ENCODE measurements at regions of chr10 and their contacts with region 1.

Region 1: DNA sequence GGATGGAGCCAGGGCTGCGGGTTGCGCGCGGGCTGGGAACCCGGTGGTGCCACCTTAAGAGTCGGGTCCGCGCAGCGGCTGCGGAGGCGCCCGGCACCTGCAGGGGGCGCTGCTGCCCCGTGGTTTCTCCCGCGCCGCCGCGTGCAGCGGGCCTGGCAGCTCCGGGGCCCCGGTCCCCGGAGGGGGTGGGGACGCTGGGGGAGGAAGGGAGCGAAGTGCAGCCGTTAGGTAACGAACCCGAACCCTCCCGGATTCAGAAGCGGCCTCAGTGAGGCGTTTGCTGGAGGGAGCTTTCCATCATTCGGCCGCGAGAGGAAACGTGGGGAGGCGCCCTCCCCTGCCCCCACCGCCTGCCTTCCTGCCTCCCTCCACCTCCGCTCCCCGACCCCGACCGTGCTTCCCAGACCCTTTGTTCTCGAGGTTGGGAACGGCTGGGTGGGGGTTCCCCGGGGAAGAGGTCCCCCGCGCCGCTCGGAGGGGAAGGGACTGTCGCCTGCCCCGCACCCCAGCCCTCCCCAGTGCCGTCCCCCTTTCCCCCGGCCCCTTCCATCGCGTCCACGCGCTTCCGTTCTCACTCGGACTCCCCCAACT is 29.6 kb downstream of the SKIDA1 start:
- DNase-seq: peak; percentile 73 to 93 (median 86)
- ATAC-seq: peak; percentile 84
- H3K4me3 ChIP-seq: peak overlapping the region; percentile 73
- H3K4me3 Mint-ChIP-seq: peak overlapping the region; percentile 78
- H3K27ac ChIP-seq: no peak overlapping the region
- H3K27ac Mint-ChIP-seq: peak overlapping the region; percentile 16
- H3K4me1 ChIP-seq: peaks cover 46% of the 10 kb centered on the region
- H3K4me1 Mint-ChIP-seq: peaks cover 25% of the 10 kb centered on the region
- H3K27me3 ChIP-seq: peaks cover 47 to 65% of the 10 kb centered on the region in 2 experiments
- H3K27me3 Mint-ChIP-seq: peaks cover 68% of the 10 kb centered on the region
- CTCF ChIP-seq: peak; percentile 93

Region 2: DNA sequence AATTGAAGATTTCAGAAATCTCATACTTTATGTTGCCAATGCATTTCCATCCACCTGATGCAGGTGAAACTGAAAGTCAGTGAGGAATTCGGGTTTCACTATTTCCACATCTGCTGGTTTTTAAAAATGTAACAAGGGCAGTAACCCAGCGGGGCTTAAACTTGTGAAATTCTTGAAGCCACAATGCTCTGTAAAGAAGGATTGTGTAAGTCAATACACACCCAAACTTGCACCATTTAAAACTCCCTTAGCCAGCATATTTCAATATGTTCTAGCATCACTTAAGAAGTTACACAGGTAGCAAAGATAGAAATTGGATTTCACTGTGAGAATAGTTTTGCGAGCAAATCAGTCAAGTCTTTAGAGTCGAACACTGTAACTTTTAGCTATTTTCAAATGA is 1293.5 kb before region 1 on chr10:
- CTCF ChIA-PET with region 1: no interaction called
- POLR2A ChIA-PET with region 1: no interaction called
- intact Hi-C with region 1: no loop called
- DNase-seq: peak in 2 of 14 experiments; percentile 0 to 7
- ATAC-seq: no peak
- H3K4me3 ChIP-seq: no peak overlapping the region
- H3K4me3 Mint-ChIP-seq: no peak overlapping the region
- H3K27ac ChIP-seq: no peak overlapping the region
- H3K27ac Mint-ChIP-seq: no peak overlapping the region
- H3K4me1 ChIP-seq: no peaks in the 10 kb centered on the region
- H3K4me1 Mint-ChIP-seq: no peaks in the 10 kb centered on the region
- H3K27me3 ChIP-seq: no peaks in the 10 kb centered on the region
- H3K27me3 Mint-ChIP-seq: no peaks in the 10 kb centered on the region
- CTCF ChIP-seq: no peak

Region 3: DNA sequence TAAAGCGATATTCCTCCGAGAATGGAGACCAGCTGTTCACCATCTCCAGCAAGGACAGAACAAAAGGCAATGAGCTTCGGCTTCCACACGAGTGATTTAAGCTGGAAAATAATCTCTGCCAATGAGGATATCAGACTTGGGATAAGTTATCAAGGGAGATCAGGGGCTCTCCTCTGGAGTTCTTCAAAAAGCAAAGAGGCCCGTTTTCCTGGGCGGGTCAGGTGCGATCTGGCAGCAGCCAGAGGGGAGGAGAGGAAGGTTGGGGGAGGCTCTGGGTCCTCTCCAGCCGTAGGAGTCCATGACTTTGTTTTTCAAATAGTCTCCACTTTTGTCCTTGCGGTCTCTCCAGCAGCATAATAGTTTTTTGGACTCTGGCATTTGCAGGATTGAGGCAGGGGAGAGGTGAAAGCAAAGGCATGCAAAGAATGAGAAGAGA is 181.6 kb before region 1 on chr10:
- CTCF ChIA-PET with region 1: no interaction called
- POLR2A ChIA-PET with region 1: no interaction called
- intact Hi-C with region 1: no loop called
- DNase-seq: no peak
- ATAC-seq: no peak
- H3K4me3 ChIP-seq: no peak overlapping the region
- H3K4me3 Mint-ChIP-seq: no peak overlapping the region
- H3K27ac ChIP-seq: no peak overlapping the region
- H3K27ac Mint-ChIP-seq: no peak overlapping the region
- H3K4me1 ChIP-seq: no peaks in the 10 kb centered on the region
- H3K4me1 Mint-ChIP-seq: no peaks in the 10 kb centered on the region
- H3K27me3 ChIP-seq: no peaks in the 10 kb centered on the region
- H3K27me3 Mint-ChIP-seq: no peaks in the 10 kb centered on the region
- CTCF ChIP-seq: no peak

Region 4: DNA sequence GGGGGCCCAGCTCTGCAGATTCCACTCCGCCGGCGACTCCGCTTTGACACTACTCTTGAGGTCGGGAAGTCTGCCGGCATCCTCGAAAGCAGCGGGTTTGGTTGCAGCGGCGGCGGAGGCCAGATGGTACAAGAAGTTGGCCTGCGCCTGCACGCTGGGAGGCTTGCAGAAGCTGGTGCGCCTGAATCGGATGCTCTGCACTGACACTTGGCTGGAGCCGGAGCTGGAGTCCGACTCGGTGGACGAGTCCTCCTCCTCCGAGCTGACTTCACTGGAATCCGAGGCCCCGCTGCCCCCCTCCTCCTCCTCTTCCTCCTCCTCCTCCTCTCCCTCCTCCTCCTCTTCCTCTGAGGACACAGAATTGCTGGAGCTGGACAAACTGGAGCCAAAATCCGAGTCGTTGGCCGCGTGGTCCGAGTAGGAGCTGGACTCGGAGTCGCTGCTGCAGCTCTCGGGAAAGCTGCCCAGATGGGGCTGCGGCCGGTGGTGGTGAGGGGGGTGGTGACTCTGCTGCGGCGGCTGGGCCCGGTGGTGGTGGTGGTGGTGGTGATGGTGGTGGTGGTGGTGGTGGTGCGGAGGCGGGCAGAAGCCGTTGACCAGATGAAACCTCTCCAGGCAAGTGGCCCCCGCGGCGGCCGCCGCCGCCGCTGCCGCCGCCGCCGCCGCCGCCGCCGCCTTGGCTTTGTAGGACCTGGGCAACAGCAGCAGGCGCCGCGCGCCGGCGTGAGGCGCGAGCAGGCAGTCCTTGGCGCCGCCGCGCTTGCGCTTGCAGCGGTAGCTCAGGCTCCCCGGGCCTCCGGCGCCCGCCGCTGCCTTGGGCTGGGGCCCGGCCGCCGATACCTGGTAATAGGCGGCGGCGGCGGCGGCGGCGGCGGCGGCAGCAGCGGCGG is 20.6 kb after region 1 on chr10:
- CTCF ChIA-PET with region 1: interaction called, 29 read pairs
- POLR2A ChIA-PET with region 1: interaction called, 10 read pairs
- intact Hi-C with region 1: loop called (anchors 2 kb)
- DNase-seq: peak in 9 of 14 experiments; percentile 31 to 83 (median 54)
- ATAC-seq: peak; percentile 66
- H3K4me3 ChIP-seq: peak overlapping the region; percentile 39
- H3K4me3 Mint-ChIP-seq: peak overlapping the region; percentile 77
- H3K27ac ChIP-seq: no peak overlapping the region
- H3K27ac Mint-ChIP-seq: no peak overlapping the region
- H3K4me1 ChIP-seq: peaks cover 39% of the 10 kb centered on the region
- H3K4me1 Mint-ChIP-seq: peaks cover 44% of the 10 kb centered on the region
- H3K27me3 ChIP-seq: peaks cover 58 to 84% of the 10 kb centered on the region in 2 experiments
- H3K27me3 Mint-ChIP-seq: peaks cover 92% of the 10 kb centered on the region
- CTCF ChIP-seq: no peak

Region 5: DNA sequence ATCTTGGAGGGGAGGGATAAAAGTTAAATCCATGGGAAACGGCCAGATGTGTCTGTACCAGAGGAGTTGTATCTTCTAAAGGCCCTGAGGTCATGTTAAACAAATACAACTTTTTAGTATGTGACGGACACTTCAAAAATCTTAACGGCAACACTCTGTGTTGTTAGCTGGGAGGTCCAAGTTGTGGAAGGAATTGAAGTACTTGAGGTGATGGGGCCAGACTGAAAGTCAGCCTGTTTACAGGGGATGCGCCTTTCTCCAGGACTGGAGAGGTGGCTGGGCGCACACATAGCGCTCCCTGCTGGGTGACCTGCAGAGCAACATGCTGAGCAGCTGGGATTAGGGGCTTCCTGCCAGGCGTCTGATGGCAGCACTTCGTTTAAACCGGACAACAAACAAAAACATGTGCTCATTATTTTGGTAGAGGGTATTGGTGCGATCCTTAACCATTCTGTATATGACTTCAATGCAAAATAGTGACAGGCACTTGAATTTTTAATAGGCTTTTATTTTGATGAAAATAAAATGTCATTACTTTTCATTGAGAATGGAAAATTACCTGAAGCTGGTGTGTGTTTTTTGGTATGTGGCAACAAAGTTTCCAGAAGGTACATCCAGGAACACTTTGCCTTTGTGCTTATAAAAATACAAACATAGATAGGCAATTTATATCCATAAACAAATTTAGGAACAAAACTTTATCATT is 236.4 kb after region 1 on chr10:
- CTCF ChIA-PET with region 1: interaction called, 23 read pairs
- POLR2A ChIA-PET with region 1: interaction called, 3 read pairs
- intact Hi-C with region 1: loop called (anchors 2 to 5 kb)
- DNase-seq: peak in 7 of 14 experiments; percentile 20 to 65 (median 45)
- ATAC-seq: peak; percentile 71
- H3K4me3 ChIP-seq: no peak overlapping the region
- H3K4me3 Mint-ChIP-seq: no peak overlapping the region
- H3K27ac ChIP-seq: no peak overlapping the region
- H3K27ac Mint-ChIP-seq: no peak overlapping the region
- H3K4me1 ChIP-seq: peaks cover 17% of the 10 kb centered on the region
- H3K4me1 Mint-ChIP-seq: peaks cover 40% of the 10 kb centered on the region
- H3K27me3 ChIP-seq: no peaks in the 10 kb centered on the region
- H3K27me3 Mint-ChIP-seq: no peaks in the 10 kb centered on the region
- CTCF ChIP-seq: peak; percentile 40

Region 6: GRCh38 chr10:21989453-21990154 is 493.8 kb after region 1 on chr10:
- CTCF ChIA-PET with region 1: interaction called, 13 read pairs
- POLR2A ChIA-PET with region 1: interaction called, 4 read pairs
- intact Hi-C with region 1: no loop called
- DNase-seq: peak in 9 of 14 experiments; percentile 3 to 67 (median 19)
- ATAC-seq: peak; percentile 87
- H3K4me3 ChIP-seq: no peak overlapping the region
- H3K4me3 Mint-ChIP-seq: no peak overlapping the region
- H3K27ac ChIP-seq: no peak overlapping the region
- H3K27ac Mint-ChIP-seq: no peak overlapping the region
- H3K4me1 ChIP-seq: peaks cover 3% of the 10 kb centered on the region
- H3K4me1 Mint-ChIP-seq: peaks cover 10% of the 10 kb centered on the region
- H3K27me3 ChIP-seq: no peaks in the 10 kb centered on the region
- H3K27me3 Mint-ChIP-seq: no peaks in the 10 kb centered on the region
- CTCF ChIP-seq: peak; percentile 57

Region 7: DNA sequence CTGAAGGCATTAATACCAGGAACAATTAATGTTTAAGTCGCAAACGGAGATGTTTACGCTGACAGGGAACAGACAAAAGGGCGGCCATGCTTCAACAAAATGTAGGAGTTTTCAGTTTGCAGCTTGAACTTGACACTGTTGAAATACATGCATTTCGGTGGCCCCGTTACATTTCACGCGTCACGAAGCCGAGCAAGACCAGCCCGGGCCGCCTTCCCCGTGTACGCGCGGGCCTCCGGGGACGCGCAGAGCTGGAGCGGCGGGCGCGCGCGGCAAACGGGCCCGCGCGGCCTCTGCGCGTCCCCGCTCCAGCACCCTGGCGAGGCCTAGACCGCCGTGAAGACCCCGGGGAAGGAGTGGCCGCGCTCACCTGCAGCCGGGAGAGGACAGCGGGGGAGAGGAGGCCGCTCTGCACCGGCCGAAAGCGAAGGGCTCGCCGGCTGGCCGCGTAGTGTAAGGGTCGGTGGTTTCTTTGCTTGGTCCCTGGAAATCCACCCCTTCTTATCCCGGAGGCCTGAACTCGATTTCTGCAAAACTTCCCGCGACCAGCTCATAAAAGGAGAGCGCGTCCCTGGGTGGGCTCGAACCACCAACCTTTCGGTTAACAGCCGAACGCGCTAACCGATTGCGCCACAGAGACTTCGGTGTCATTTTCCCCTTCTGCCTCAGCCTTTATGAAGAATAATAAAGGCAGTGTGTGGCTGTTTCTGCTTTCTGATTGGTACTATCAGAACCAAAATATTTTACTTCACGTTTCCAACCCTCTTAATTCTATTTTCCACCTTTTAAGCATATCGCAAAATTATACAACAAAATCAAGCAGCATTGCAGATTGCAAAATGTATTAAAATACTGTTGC is 733.3 kb after region 1 on chr10:
- CTCF ChIA-PET with region 1: interaction called, 7 read pairs
- POLR2A ChIA-PET with region 1: interaction called, 5 read pairs
- intact Hi-C with region 1: loop called in 1 of 2 experiments (anchors 10 kb)
- DNase-seq: peak; percentile 72 to 93 (median 82)
- ATAC-seq: peak; percentile 77
- H3K4me3 ChIP-seq: peak overlapping the region; percentile 62
- H3K4me3 Mint-ChIP-seq: peak overlapping the region; percentile 92
- H3K27ac ChIP-seq: peak overlapping the region; percentile 25 to 53
- H3K27ac Mint-ChIP-seq: peak overlapping the region; percentile 99
- H3K4me1 ChIP-seq: peaks cover 3% of the 10 kb centered on the region
- H3K4me1 Mint-ChIP-seq: peaks cover 19% of the 10 kb centered on the region
- H3K27me3 ChIP-seq: no peaks in the 10 kb centered on the region
- H3K27me3 Mint-ChIP-seq: peaks cover 11% of the 10 kb centered on the region
- CTCF ChIP-seq: no peak

Region 8: GRCh38 chr10:22436884-22437619 is 941.2 kb after region 1 on chr10:
- CTCF ChIA-PET with region 1: no interaction called
- POLR2A ChIA-PET with region 1: interaction called, 9 read pairs
- intact Hi-C with region 1: loop called (anchors 5 to 10 kb)
- DNase-seq: peak; percentile 84 to 96 (median 90)
- ATAC-seq: peak; percentile 85
- H3K4me3 ChIP-seq: peak overlapping the region; percentile 92
- H3K4me3 Mint-ChIP-seq: peak overlapping the region; percentile 98
- H3K27ac ChIP-seq: peak overlapping the region; percentile 90 to 94
- H3K27ac Mint-ChIP-seq: peak overlapping the region; percentile 100
- H3K4me1 ChIP-seq: peaks cover 24% of the 10 kb centered on the region
- H3K4me1 Mint-ChIP-seq: peaks cover 43% of the 10 kb centered on the region
- H3K27me3 ChIP-seq: no peaks in the 10 kb centered on the region
- H3K27me3 Mint-ChIP-seq: no peaks in the 10 kb centered on the region
- CTCF ChIP-seq: peak; percentile 11

Region 9: GRCh38 chr10:23067939-23068775 is 1572.3 kb after region 1 on chr10:
- CTCF ChIA-PET with region 1: no interaction called
- POLR2A ChIA-PET with region 1: no interaction called
- intact Hi-C with region 1: loop called in 1 of 2 experiments (anchors 10 kb)
- DNase-seq: peak; percentile 44 to 81 (median 56)
- ATAC-seq: peak; percentile 59
- H3K4me3 ChIP-seq: no peak overlapping the region
- H3K4me3 Mint-ChIP-seq: no peak overlapping the region
- H3K27ac ChIP-seq: no peak overlapping the region
- H3K27ac Mint-ChIP-seq: no peak overlapping the region
- H3K4me1 ChIP-seq: peaks cover 3% of the 10 kb centered on the region
- H3K4me1 Mint-ChIP-seq: peaks cover 5% of the 10 kb centered on the region
- H3K27me3 ChIP-seq: no peaks in the 10 kb centered on the region
- H3K27me3 Mint-ChIP-seq: peaks cover 19% of the 10 kb centered on the region
- CTCF ChIP-seq: peak; percentile 89